HEK293 (cell line): ENCODE measurements at regions of chr11 and their contacts with region 1.

Region 1: DNA sequence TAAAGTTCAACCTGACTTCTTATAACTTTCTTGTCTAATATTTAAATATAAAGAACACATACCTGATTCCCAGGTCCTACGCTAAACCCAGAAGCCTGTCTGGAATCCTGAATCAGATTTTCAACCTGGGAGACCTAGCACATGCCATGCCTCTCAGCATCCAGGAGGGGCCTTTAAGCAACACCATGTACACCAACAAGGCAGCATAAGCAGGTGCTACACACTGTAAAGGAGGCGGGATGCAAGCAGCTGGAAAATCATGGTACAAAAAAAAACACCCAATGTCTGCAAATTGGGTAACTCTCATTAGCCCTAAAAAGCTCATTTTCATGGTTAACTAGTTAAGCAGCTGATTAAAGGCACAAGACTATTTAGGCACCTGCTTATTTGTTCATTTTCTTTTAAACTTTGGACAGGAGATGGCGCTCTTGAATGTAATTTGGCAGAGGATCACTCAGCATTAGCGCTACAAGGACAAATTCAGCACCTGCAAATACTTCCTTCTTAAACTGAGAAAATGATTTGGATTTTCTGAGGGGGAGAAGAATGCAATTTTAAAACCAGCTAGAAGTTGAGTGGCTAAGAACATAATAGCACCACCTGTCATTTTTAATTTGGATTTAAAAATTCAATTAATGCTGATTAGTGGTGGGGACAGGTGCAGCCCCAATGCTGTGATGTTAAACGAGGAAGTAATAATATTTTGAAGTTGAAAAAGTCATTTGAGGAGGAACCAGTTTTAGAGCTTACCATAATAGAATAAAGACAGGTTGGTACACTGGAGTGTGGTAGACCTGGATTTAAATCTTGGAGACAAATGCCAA is 104.0 kb downstream of the FAR1 start:
- H3K4me3 ChIP-seq: no peak overlapping the region
- H3K27ac ChIP-seq: no peak overlapping the region
- H3K4me1 ChIP-seq: no peaks in the 10 kb centered on the region
- CTCF ChIP-seq: no peak

Region 2: GRCh38 chr11:13761712-13762111 is 10.7 kb before region 1 on chr11:
- CTCF ChIA-PET with region 1: interaction called, 22 read pairs
- POLR2A ChIA-PET with region 1: no interaction called
- H3K4me3 ChIP-seq: no peak overlapping the region
- H3K27ac ChIP-seq: no peak overlapping the region
- H3K4me1 ChIP-seq: no peaks in the 10 kb centered on the region
- CTCF ChIP-seq: no peak

Region 3: GRCh38 chr11:13944911-13945425 is 172.5 kb after region 1 on chr11:
- CTCF ChIA-PET with region 1: interaction called, 25 read pairs
- POLR2A ChIA-PET with region 1: no interaction called
- H3K4me3 ChIP-seq: no peak overlapping the region
- H3K27ac ChIP-seq: no peak overlapping the region
- H3K4me1 ChIP-seq: peaks cover 4% of the 10 kb centered on the region; the same call in 1 of the 2 replicates
- CTCF ChIP-seq: no peak

Region 4: DNA sequence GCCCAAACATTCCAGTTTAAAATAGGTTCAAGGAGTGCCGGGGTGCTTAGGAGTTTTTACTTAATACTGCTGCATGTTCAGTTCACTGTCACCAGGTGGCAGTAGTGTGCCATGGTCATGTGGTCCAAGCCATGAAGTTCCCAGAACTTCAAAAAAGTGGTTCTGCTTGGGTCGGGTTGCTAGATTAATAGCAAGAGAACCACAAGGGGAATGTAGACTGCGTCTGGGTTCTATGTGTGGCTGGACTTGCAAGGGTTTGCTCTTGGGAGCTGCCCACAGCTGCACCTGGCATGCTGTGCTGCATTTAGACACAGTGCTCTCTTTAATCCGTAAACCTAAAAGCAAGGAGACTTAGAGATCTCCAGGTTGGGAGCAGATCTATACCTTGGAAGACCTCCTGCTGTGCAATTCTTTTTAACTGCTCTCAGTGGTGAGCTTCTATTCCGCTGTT is 183.6 kb after region 1 on chr11:
- CTCF ChIA-PET with region 1: interaction called, 13 read pairs
- POLR2A ChIA-PET with region 1: no interaction called
- H3K4me3 ChIP-seq: no peak overlapping the region
- H3K27ac ChIP-seq: no peak overlapping the region
- H3K4me1 ChIP-seq: no peaks in the 10 kb centered on the region
- CTCF ChIP-seq: no peak

Region 5: DNA sequence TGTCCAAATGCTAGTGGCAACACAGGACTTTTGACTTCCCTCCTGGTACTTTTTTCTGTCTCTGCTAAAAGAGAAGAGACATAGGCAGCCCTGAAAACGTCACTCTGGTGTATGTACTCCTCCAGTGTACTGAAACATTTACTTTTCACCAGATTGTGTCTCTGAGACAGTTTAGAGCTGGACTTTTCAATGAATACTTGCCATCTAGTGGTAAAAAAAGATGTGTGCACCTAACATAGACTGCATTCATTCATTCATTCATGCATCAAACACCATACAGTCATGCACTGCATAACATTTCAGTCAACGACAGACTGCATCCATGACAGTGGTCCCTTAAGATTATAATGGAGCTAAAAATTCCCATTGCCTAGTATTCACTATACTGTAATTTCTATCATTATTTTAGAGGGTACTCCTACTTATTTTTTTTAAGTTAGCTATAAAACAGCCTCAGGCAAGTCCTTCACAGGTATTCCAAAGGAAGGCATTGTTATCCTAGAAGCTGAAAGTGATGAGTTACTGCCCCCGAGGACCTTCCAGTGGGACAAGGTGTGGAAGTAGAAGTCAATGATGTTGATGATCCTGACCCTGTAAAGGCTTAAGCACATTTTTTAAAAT is 376.3 kb after region 1 on chr11:
- CTCF ChIA-PET with region 1: interaction called, 21 read pairs
- POLR2A ChIA-PET with region 1: no interaction called
- H3K4me3 ChIP-seq: no peak overlapping the region
- H3K27ac ChIP-seq: no peak overlapping the region
- H3K4me1 ChIP-seq: no peaks in the 10 kb centered on the region
- CTCF ChIP-seq: no peak

Region 6: GRCh38 chr11:14249121-14249963 is 476.9 kb after region 1 on chr11:
- CTCF ChIA-PET with region 1: interaction called, 12 read pairs
- POLR2A ChIA-PET with region 1: no interaction called
- H3K4me3 ChIP-seq: no peak overlapping the region
- H3K27ac ChIP-seq: no peak overlapping the region
- H3K4me1 ChIP-seq: no peaks in the 10 kb centered on the region
- CTCF ChIP-seq: peak; percentile 44; the same call in 1 of the 2 replicates